ENCODE measurements at regions of chr11 and their contacts with region 1.

Region 1: GRCh38 chr11:128157423-128158298 is 429.7 kb downstream of the ETS1 start:
- DNase-seq: peak; percentile 79
- ATAC-seq: peak; percentile 90
- H3K4me3 Mint-ChIP-seq: peak overlapping the region; percentile 63
- H3K27ac Mint-ChIP-seq: peak overlapping the region; percentile 84
- H3K4me1 Mint-ChIP-seq: peaks cover 11% of the 10 kb centered on the region
- H3K27me3 Mint-ChIP-seq: no peaks in the 10 kb centered on the region
- CTCF ChIP-seq: peak; percentile 100

Region 2: GRCh38 chr11:128039140-128040021 is 118.3 kb before region 1 on chr11:
- CTCF ChIA-PET with region 1: interaction called, 86 read pairs
- POLR2A ChIA-PET with region 1: interaction called, 8 read pairs
- intact Hi-C with region 1: loop called (anchors 1 kb)
- DNase-seq: peak; percentile 91
- ATAC-seq: peak; percentile 90
- H3K4me3 Mint-ChIP-seq: peak overlapping the region; percentile 58
- H3K27ac Mint-ChIP-seq: peak overlapping the region; percentile 93
- H3K4me1 Mint-ChIP-seq: peaks cover 42% of the 10 kb centered on the region
- H3K27me3 Mint-ChIP-seq: no peaks in the 10 kb centered on the region
- CTCF ChIP-seq: peak; percentile 45

Region 3: DNA sequence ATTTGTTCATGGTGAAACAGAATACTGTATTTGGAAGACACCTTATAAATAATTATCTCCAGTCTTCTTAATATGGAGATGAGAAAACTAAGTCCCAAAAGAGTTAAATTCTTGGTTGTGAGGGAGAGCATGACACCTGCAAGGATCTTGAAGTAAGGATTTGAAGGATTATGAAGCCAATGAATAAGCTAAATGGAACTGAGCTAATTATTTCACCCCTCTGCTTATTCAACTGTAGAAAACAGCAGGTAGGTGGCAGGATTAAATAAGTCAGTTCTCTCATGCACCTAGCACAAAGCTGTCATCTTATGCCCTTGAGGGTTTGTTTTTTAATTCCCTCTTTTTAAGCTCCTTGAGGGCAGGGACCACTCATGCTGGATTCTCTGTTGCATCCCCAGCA is 27.6 kb before region 1 on chr11:
- CTCF ChIA-PET with region 1: interaction called, 10 read pairs
- POLR2A ChIA-PET with region 1: no interaction called
- intact Hi-C with region 1: no loop called
- DNase-seq: no peak
- ATAC-seq: no peak
- H3K4me3 Mint-ChIP-seq: no peak overlapping the region
- H3K27ac Mint-ChIP-seq: no peak overlapping the region
- H3K4me1 Mint-ChIP-seq: no peaks in the 10 kb centered on the region
- H3K27me3 Mint-ChIP-seq: no peaks in the 10 kb centered on the region
- CTCF ChIP-seq: no peak

Region 4: GRCh38 chr11:128219731-128220120 is 62.1 kb after region 1 on chr11:
- CTCF ChIA-PET with region 1: interaction called, 11 read pairs
- POLR2A ChIA-PET with region 1: no interaction called
- intact Hi-C with region 1: no loop called
- DNase-seq: no peak
- ATAC-seq: no peak
- H3K4me3 Mint-ChIP-seq: no peak overlapping the region
- H3K27ac Mint-ChIP-seq: no peak overlapping the region
- H3K4me1 Mint-ChIP-seq: peaks cover 6% of the 10 kb centered on the region
- H3K27me3 Mint-ChIP-seq: no peaks in the 10 kb centered on the region
- CTCF ChIP-seq: no peak

Region 5: DNA sequence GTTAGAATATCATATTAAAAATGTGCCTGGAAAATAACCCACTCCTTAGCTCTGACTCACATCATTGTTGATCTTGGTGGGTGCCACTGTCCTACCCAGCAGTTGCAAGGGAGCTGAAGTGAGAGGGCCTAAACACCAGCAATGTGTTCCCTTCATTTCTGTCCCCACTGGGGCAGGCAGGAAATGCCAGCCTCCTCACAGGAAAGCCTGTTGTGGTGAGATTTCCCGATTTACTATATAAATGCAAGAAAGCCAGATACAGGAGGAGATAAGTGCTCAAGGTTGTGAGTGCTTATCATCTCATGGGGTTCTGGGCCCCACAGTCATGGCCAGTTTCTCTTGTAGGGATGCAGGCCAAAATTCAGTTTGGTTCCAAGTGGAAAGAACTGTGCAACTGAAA is 520.4 kb after region 1 on chr11:
- CTCF ChIA-PET with region 1: interaction called, 10 read pairs
- POLR2A ChIA-PET with region 1: no interaction called
- intact Hi-C with region 1: no loop called
- DNase-seq: no peak
- ATAC-seq: no peak
- H3K4me3 Mint-ChIP-seq: no peak overlapping the region
- H3K27ac Mint-ChIP-seq: no peak overlapping the region
- H3K4me1 Mint-ChIP-seq: peaks cover 10% of the 10 kb centered on the region
- H3K27me3 Mint-ChIP-seq: peaks cover 1% of the 10 kb centered on the region
- CTCF ChIP-seq: no peak

Region 6: DNA sequence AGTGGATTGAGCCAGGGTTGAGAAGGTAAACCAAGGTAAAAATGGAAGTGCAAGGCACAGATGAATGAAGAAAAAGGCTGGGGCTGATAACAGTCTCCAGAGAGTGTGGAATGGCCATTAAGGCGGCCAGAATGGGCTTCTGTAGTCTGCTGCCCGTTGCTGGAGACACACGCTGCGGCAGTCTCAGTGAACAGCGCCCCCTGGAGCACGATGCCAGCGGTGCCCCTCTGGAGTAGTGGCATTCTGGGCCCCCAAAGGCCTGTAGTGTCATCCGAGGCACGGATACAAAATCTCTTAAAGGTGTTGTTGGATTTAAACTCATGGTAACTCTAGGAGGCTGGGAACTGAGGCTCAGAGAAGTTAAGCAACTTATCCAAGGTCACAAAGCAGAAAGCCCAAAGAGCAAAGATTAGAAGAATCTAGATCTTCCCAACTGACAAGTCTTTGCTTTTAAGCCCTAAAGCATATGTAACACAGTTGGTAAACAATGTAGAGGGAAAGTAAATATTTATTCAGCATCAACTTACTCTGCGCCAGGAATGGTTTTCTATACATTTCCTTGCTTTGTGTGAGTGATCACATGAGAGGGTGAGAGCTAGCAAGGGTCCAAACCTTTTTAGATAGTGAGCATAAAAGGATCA is 691.3 kb after region 1 on chr11:
- CTCF ChIA-PET with region 1: interaction called, 57 read pairs
- POLR2A ChIA-PET with region 1: no interaction called
- intact Hi-C with region 1: no loop called
- DNase-seq: peak; percentile 84
- ATAC-seq: peak; percentile 90
- H3K4me3 Mint-ChIP-seq: no peak overlapping the region
- H3K27ac Mint-ChIP-seq: no peak overlapping the region
- H3K4me1 Mint-ChIP-seq: peaks cover 21% of the 10 kb centered on the region
- H3K27me3 Mint-ChIP-seq: no peaks in the 10 kb centered on the region
- CTCF ChIP-seq: peak; percentile 81

Measured in activated CD8-positive, alpha-beta T cell treated with anti-CD3 and anti-CD28 coated beads for 36 hours (primary cell).